ENCODE measurements at regions of chr5 and their contacts with region 1.

Region 1: DNA sequence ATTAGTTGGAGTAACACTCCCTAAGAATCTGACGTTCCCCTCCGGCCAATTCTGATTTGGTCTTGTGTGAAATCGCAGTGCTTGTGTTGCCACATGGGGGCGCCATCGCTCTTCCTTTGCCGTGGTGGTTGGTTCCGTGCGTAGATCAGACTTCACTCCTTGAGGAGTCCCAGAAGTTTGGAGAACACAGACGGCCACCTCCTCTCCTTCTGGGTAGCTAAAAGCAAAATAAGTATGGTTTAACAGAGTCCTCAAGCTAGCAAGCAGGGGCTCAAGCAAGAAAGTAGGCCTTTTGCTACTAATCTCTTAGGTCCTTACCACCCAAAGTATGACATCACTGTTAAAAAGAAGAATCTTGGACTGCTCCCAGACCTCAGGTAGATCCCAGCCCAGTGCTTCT is 59.5 kb downstream of the HSPA4 start:
- DNase-seq: peak; percentile 94
- H3K4me3 Mint-ChIP-seq: no peak overlapping the region
- H3K27ac Mint-ChIP-seq: no peak overlapping the region
- H3K4me1 Mint-ChIP-seq: peaks cover 28% of the 10 kb centered on the region
- H3K27me3 Mint-ChIP-seq: no peaks in the 10 kb centered on the region

Region 2: GRCh38 chr5:133123297-133123696 is 12.0 kb after region 1 on chr5:
- intact Hi-C with region 1: no loop called
- DNase-seq: no peak
- H3K4me3 Mint-ChIP-seq: no peak overlapping the region
- H3K27ac Mint-ChIP-seq: no peak overlapping the region
- H3K4me1 Mint-ChIP-seq: no peaks in the 10 kb centered on the region
- H3K27me3 Mint-ChIP-seq: peaks cover 4% of the 10 kb centered on the region

Region 3: GRCh38 chr5:133287500-133287899 is 176.2 kb after region 1 on chr5:
- intact Hi-C with region 1: loop called (anchors 1 kb)
- DNase-seq: peak; percentile 79
- H3K4me3 Mint-ChIP-seq: no peak overlapping the region
- H3K27ac Mint-ChIP-seq: no peak overlapping the region
- H3K4me1 Mint-ChIP-seq: no peaks in the 10 kb centered on the region
- H3K27me3 Mint-ChIP-seq: no peaks in the 10 kb centered on the region

Region 4: GRCh38 chr5:133398646-133399101 is 287.4 kb after region 1 on chr5:
- intact Hi-C with region 1: loop called (anchors 10 kb)
- DNase-seq: peak; percentile 60
- H3K4me3 Mint-ChIP-seq: no peak overlapping the region
- H3K27ac Mint-ChIP-seq: no peak overlapping the region
- H3K4me1 Mint-ChIP-seq: peaks cover 26% of the 10 kb centered on the region
- H3K27me3 Mint-ChIP-seq: no peaks in the 10 kb centered on the region

Region 5: DNA sequence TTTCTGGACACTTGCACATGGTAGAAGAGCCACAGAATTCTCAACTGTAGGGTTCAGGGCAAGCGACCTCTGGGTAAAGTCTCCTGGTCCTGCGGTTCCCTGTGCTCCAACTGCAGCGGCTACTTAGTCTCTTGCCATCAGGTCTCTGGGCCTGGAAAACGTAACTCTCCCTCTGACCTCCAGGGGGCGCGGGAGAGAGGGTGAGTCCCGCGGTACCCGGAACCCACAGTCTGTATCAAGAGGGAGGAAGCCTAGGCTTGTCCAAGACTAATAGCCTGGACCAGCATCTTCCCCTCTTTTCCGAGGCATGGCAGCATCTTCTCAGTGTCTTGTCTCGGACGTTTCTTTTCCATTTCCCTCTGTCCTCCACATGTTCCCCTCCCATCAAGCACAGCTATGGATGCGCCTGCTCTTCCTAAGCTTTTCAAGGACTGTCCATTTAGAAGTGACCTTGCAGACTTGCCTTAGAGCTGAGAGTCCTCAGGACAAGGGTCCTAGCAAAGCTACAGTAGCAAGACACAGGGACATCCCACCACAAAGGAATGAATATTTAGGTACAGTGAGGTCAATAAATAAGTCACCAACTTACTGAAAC is 441.7 kb after region 1 on chr5:
- intact Hi-C with region 1: loop called (anchors 10 kb)
- DNase-seq: peak; percentile 87
- H3K4me3 Mint-ChIP-seq: no peak overlapping the region
- H3K27ac Mint-ChIP-seq: no peak overlapping the region
- H3K4me1 Mint-ChIP-seq: peaks cover 3% of the 10 kb centered on the region
- H3K27me3 Mint-ChIP-seq: peaks cover 26% of the 10 kb centered on the region

Region 6: GRCh38 chr5:133944263-133945185 is 833.2 kb after region 1 on chr5:
- intact Hi-C with region 1: loop called (anchors 2 kb)
- DNase-seq: peak; percentile 80
- H3K4me3 Mint-ChIP-seq: no peak overlapping the region
- H3K27ac Mint-ChIP-seq: no peak overlapping the region
- H3K4me1 Mint-ChIP-seq: peaks cover 8% of the 10 kb centered on the region
- H3K27me3 Mint-ChIP-seq: peaks cover 2% of the 10 kb centered on the region